WTC11 (cell line): ENCODE measurements at regions of chr11 and their contacts with region 1.

Region 1: GRCh38 chr11:7986768-7987559 is at the start of gene EIF3F:
- DNase-seq: peak; percentile 87
- ATAC-seq: peak; percentile 97
- H3K4me3 Mint-ChIP-seq: peak within 1 kb of the TSS; percentile 100
- H3K27ac Mint-ChIP-seq: peak within 1 kb of the TSS; percentile 97
- H3K4me1 Mint-ChIP-seq: peaks cover 22% of the 10 kb centered on the region
- H3K27me3 Mint-ChIP-seq: no peaks in the 10 kb centered on the region
- CTCF ChIP-seq: no peak; the same call in none of the 2 replicates
- total RNA-seq, gene EIF3F: 356 to 379 TPM (median 378 TPM) in 3 replicates

Region 2: DNA sequence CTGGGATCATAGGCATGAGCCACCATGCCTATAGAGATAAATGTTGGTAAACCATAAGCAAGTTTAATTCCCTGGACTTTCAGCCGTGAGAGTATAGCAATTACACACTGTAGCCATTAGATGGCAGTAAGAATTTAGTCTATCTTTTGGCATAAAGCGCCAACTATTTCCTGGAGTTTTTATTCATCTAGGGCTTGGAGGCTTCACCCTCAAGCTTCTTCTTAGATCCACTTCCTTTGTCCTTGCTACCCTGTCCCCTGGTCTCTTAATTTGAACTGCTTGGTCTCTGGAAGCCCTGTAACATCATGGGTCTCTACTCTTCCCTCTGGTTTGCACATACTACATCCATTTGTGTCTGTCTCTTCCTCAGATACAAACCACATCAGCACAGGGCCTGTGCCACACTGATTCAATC is 94.1 kb before region 1 on chr11:
- CTCF ChIA-PET with region 1: interaction called, 68 read pairs
- POLR2A ChIA-PET with region 1: interaction called, 7 read pairs
- DNase-seq: no peak
- ATAC-seq: peak; percentile 83
- H3K4me3 Mint-ChIP-seq: no peak overlapping the region
- H3K27ac Mint-ChIP-seq: no peak overlapping the region
- H3K4me1 Mint-ChIP-seq: peaks cover 6% of the 10 kb centered on the region
- H3K27me3 Mint-ChIP-seq: peaks cover 14% of the 10 kb centered on the region
- CTCF ChIP-seq: peak; percentile 52

Region 3: GRCh38 chr11:7904914-7905313 is 82.0 kb before region 1 on chr11:
- CTCF ChIA-PET with region 1: interaction called, 138 read pairs
- POLR2A ChIA-PET with region 1: interaction called, 22 read pairs
- DNase-seq: no peak
- ATAC-seq: no peak
- H3K4me3 Mint-ChIP-seq: 0 out of 2 replicates have a peak overlapping the region, but pooled peaks have one; percentile 3
- H3K27ac Mint-ChIP-seq: no peak overlapping the region
- H3K4me1 Mint-ChIP-seq: peaks cover 69% of the 10 kb centered on the region
- H3K27me3 Mint-ChIP-seq: no peaks in the 10 kb centered on the region
- CTCF ChIP-seq: no peak

Region 4: DNA sequence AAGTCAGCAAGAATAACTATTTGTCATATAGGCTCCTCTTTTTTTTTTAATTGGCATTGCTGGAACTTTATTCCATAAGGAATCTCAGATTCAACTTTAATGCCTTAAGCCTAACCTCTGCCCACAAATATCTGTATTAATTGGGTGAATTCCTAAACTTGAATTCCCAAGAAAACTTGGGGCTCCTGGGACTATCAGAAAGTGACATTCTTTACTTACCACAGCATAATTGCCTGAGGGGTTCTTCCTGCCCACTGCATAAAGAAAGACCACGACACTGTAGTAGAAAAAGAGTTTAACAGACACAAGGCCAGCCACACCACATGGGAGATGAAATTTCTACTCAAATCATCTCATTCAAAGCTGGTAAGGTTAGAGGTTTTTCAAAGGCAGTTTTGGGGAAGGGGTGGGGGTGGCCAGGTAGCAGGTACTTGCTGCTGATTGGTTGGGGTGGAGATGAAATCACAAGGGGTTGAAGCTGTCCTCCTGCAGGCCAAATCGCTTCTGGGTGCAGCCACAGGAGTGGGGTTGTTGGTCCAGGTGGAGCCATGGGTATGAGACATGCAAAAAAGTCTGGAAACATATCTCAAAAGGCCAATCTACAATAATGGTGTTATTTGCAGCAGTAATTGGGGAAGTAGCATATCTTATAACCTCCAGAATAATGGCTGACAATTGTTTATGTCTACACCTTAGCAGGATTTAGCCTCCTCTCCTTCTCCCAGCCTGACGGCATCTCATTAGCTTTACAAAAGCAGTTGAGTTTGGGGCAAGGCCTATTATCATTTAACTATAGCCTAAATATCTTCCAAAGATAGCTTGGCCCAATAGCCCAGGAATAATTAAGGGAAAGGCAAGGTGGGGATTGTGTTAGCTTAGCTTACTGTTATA is 17.0 kb before region 1 on chr11:
- CTCF ChIA-PET with region 1: interaction called, 37 read pairs
- POLR2A ChIA-PET with region 1: interaction called, 4 read pairs
- DNase-seq: peak; percentile 19
- ATAC-seq: peak; percentile 86
- H3K4me3 Mint-ChIP-seq: peak overlapping the region; percentile 46
- H3K27ac Mint-ChIP-seq: peak overlapping the region; percentile 69
- H3K4me1 Mint-ChIP-seq: peaks cover 44% of the 10 kb centered on the region
- H3K27me3 Mint-ChIP-seq: no peaks in the 10 kb centered on the region; the same call in 1 of the 2 replicates
- CTCF ChIP-seq: no peak

Region 5: GRCh38 chr11:8233691-8234424 is 246.9 kb after region 1 on chr11:
- CTCF ChIA-PET with region 1: no interaction called
- POLR2A ChIA-PET with region 1: no interaction called
- DNase-seq: no peak
- ATAC-seq: no peak
- H3K4me3 Mint-ChIP-seq: no peak overlapping the region
- H3K27ac Mint-ChIP-seq: no peak overlapping the region
- H3K4me1 Mint-ChIP-seq: no peaks in the 10 kb centered on the region; the same call in 1 of the 2 replicates
- H3K27me3 Mint-ChIP-seq: no peaks in the 10 kb centered on the region
- CTCF ChIP-seq: no peak

Region 6: DNA sequence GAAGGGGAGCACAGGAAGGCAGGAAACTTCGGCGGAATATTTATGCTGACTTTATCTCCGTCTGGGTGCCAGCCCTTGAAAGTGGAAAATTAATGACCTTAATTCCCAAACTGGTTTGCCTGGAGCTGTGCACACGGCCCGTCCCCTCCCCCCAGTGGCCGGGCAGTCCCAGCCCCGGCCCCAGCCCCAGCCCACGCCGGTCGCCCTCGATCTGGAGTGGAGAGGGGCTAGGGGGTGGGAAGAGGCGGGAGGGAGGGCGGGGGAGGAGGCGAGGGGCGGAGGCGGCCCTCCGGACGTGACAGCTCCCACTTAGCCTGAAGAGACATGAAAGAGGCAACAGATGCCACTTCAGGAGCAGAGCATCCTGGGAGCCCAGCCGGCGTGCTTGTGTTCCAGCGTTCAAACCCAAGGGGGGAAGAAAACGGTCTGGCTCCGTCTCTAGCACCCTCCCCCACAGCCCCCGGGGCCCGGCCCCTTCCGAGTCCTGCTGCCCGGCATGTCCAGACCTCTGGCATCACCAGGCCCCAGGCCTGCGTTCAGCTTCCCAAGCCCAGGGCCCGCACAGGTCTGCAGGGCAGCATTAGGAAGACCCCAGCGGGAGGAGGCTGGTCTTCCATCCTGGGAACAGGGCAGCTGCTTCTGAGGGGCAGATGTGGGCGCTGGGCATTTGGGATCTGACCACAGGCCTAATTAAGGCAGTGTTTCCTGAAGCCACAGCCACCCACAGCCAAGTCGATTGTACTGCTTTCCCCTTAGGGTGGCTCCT is 296.7 kb after region 1 on chr11:
- CTCF ChIA-PET with region 1: no interaction called
- POLR2A ChIA-PET with region 1: no interaction called
- DNase-seq: peak; percentile 54
- ATAC-seq: peak; percentile 73
- H3K4me3 Mint-ChIP-seq: no peak overlapping the region
- H3K27ac Mint-ChIP-seq: no peak overlapping the region
- H3K4me1 Mint-ChIP-seq: no peaks in the 10 kb centered on the region; the same call in none of the 2 replicates
- H3K27me3 Mint-ChIP-seq: peaks cover 17% of the 10 kb centered on the region
- CTCF ChIP-seq: no peak

Region 7: GRCh38 chr11:8523396-8523795 is 536.4 kb after region 1 on chr11:
- CTCF ChIA-PET with region 1: no interaction called
- POLR2A ChIA-PET with region 1: no interaction called
- DNase-seq: no peak
- ATAC-seq: no peak
- H3K4me3 Mint-ChIP-seq: no peak overlapping the region
- H3K27ac Mint-ChIP-seq: no peak overlapping the region
- H3K4me1 Mint-ChIP-seq: peaks cover 14% of the 10 kb centered on the region
- H3K27me3 Mint-ChIP-seq: no peaks in the 10 kb centered on the region; the same call in 1 of the 2 replicates
- CTCF ChIP-seq: no peak